Head of caudate nucleus (tissue), 42 donors: ENCODE measurements at regions of chr15 and their contacts with region 1.

Region 1: DNA sequence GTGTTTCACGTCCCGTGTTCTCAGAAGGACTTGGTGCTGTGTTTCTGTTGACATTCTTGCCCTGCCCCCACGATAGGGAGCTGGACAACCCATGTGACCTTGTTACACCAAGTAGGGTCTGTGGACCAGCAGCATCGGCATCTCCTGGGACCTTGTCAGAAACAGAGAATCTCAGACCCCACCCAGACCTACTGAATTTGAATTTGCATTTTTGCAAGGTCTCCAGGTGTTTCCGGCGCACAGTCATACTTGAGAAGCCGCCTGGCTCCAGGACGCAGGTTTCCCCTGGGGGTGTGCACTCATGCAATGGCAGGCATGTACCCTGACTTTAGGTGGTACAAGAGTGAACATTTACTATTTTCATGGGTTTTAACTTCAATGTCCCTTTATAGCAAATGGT is 117.9 kb downstream of the TLE3 start:
- DNase-seq: peak in 1 of 42 donors; percentile 16

Region 2: DNA sequence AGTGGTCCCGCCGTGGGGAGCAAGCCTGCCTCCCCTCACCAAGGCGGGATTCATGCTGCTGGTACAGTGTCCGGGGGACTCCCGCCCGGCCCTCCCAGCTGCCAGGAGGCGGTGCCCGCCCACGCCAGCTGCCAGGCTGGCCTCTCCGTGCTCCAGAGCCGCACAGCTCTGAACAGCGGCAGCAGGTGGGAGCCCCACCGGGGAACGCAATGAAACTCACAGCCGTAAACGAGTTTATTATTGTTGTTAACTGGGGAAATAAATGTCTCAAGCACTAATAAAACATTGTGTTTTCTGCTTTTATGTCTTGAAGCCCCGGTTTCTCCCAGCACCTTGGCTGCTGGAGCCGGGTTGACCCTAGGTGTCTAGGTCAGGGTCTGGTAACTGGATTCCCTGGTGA is 435.6 kb after region 1 on chr15:
- intact Hi-C with region 1: loop called (anchors 10 kb)
- DNase-seq: no peak